HepG2 (cell line): ENCODE measurements at regions of chr12 and their contacts with region 1.

Region 1: GRCh38 chr12:39443081-39443928 is at the start of gene KIF21A:
- DNase-seq: peak; percentile 89
- ATAC-seq: peak; percentile 94
- H3K4me3 ChIP-seq: peak within 1 kb of the TSS; percentile 80 to 95 (median 93)
- H3K27ac ChIP-seq: peak within 1 kb of the TSS; percentile 100
- H3K4me1 ChIP-seq: peaks cover 36% of the 10 kb centered on the region
- H3K27me3 ChIP-seq: no peaks in the 10 kb centered on the region; a peak in 1 of 5 replicates
- CTCF ChIP-seq: peak; percentile 58
- EP300 ChIP-seq: peak; percentile 13 to 32; a peak in 3 of 4 replicates
- POLR2A ChIP-seq: peak; percentile 91 to 95
- RAD21 ChIP-seq: peak; percentile 81
- total RNA-seq, gene KIF21A: 39.7 and 55.9 TPM in 2 replicates

Region 2: DNA sequence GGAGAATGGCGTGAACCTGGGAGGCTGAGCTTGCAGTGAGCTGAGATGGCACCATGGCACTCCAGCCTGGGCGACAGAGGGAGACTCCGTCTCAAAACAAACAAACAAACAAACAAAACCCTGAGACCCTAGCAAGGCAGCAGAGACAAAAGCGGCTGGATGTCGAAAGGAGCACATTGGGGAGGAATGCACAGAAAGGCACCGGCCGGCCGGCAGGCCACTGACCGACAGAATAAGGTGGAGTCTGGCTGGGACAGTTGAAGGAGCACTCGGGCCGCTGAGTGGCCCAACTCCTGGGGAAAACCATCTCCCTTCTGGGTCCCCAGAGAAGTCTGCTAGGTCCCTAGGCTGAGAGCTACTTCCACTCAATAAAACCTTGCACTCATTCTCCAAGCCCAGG is 256.6 kb before region 1 on chr12:
- CTCF ChIA-PET with region 1: no interaction called
- POLR2A ChIA-PET with region 1: no interaction called
- in situ Hi-C with region 1: no loop called
- intact Hi-C with region 1: no loop called
- DNase-seq: no peak
- ATAC-seq: no peak
- H3K4me3 ChIP-seq: no peak overlapping the region
- H3K27ac ChIP-seq: no peak overlapping the region
- H3K4me1 ChIP-seq: no peaks in the 10 kb centered on the region
- H3K27me3 ChIP-seq: no peaks in the 10 kb centered on the region
- CTCF ChIP-seq: no peak
- EP300 ChIP-seq: no peak
- POLR2A ChIP-seq: no peak
- RAD21 ChIP-seq: no peak

Region 3: DNA sequence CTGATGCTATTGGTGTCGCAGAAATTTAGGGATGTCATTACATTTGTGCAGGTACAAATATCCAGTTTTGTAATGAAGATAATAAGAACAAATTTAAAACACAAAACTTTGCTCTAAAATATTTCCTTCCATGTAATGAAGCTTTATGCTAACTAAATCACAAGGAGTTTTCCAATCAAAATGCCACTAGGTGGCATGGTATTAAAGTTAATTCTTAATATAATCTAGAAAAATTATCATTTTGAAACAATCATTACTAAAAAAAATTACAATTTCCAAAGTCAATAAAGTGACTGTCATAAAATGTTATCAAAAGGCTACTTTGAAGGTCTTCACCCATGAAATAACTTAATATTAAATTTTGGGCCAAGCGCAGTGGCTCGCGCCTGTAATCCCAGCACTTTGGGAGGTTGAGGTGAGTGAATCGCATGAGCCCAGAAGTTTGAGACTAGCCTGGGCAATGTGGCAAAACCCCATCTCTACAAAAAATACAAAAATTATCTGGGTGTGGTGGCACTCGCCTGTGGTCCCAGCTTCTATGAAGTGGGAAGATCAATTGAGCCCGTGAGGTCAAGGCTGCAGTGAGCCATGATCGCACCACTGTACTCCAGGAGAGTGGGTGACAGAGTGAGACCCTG is 77.8 kb before region 1 on chr12:
- CTCF ChIA-PET with region 1: no interaction called
- POLR2A ChIA-PET with region 1: interaction called, 4 read pairs
- in situ Hi-C with region 1: no loop called
- intact Hi-C with region 1: loop called (anchors 2 kb)
- DNase-seq: no peak
- ATAC-seq: no peak
- H3K4me3 ChIP-seq: no peak overlapping the region
- H3K27ac ChIP-seq: no peak overlapping the region
- H3K4me1 ChIP-seq: peaks cover 8% of the 10 kb centered on the region
- H3K27me3 ChIP-seq: no peaks in the 10 kb centered on the region
- CTCF ChIP-seq: no peak
- EP300 ChIP-seq: no peak
- POLR2A ChIP-seq: no peak
- RAD21 ChIP-seq: no peak

Region 4: GRCh38 chr12:39426636-39427245 is 16.6 kb before region 1 on chr12:
- CTCF ChIA-PET with region 1: interaction called, 3 read pairs
- POLR2A ChIA-PET with region 1: interaction called, 32 read pairs
- in situ Hi-C with region 1: no loop called
- intact Hi-C with region 1: loop called (anchors 2 kb)
- DNase-seq: no peak
- ATAC-seq: peak; percentile 56
- H3K4me3 ChIP-seq: no peak overlapping the region
- H3K27ac ChIP-seq: peak overlapping the region; percentile 58
- H3K4me1 ChIP-seq: peaks cover 44% of the 10 kb centered on the region
- H3K27me3 ChIP-seq: no peaks in the 10 kb centered on the region
- CTCF ChIP-seq: no peak
- EP300 ChIP-seq: no peak
- POLR2A ChIP-seq: no peak
- RAD21 ChIP-seq: no peak

Region 5: DNA sequence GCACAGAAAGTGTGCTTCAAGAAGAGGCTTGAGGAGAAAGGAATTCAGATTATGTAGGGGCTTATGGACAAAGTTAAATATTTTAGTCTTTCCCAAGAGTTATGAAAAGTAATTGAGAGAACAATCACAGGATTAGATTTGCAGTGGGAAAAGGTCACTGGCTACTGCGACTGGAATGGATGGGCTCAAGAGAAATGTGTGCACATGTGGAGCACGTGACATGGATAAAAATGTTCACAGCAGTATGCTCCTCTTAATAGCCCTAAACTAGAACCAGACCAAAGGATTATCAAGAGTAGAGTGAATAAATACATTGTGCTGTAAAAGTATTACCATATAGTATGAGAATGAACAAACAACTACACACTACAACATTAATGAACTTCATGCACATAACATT is 98.2 kb after region 1 on chr12:
- CTCF ChIA-PET with region 1: no interaction called
- POLR2A ChIA-PET with region 1: no interaction called
- in situ Hi-C with region 1: no loop called
- intact Hi-C with region 1: loop called (anchors 5 kb)
- DNase-seq: no peak
- ATAC-seq: no peak
- H3K4me3 ChIP-seq: no peak overlapping the region
- H3K27ac ChIP-seq: no peak overlapping the region
- H3K4me1 ChIP-seq: no peaks in the 10 kb centered on the region
- H3K27me3 ChIP-seq: no peaks in the 10 kb centered on the region
- CTCF ChIP-seq: no peak
- EP300 ChIP-seq: no peak
- POLR2A ChIP-seq: no peak
- RAD21 ChIP-seq: no peak

Region 6: GRCh38 chr12:40446385-40446784 is 1003.1 kb after region 1 on chr12:
- CTCF ChIA-PET with region 1: no interaction called
- POLR2A ChIA-PET with region 1: no interaction called
- in situ Hi-C with region 1: no loop called
- intact Hi-C with region 1: no loop called
- DNase-seq: peak; percentile 12
- ATAC-seq: no peak
- H3K4me3 ChIP-seq: no peak overlapping the region
- H3K27ac ChIP-seq: no peak overlapping the region
- H3K4me1 ChIP-seq: no peaks in the 10 kb centered on the region
- H3K27me3 ChIP-seq: no peaks in the 10 kb centered on the region; a peak in 1 of 5 replicates
- CTCF ChIP-seq: peak; percentile 23; the same call in 1 of the 2 replicates
- EP300 ChIP-seq: no peak
- POLR2A ChIP-seq: no peak
- RAD21 ChIP-seq: no peak